ENCODE measurements at regions of chr11 and their contacts with region 1.

Region 1: DNA sequence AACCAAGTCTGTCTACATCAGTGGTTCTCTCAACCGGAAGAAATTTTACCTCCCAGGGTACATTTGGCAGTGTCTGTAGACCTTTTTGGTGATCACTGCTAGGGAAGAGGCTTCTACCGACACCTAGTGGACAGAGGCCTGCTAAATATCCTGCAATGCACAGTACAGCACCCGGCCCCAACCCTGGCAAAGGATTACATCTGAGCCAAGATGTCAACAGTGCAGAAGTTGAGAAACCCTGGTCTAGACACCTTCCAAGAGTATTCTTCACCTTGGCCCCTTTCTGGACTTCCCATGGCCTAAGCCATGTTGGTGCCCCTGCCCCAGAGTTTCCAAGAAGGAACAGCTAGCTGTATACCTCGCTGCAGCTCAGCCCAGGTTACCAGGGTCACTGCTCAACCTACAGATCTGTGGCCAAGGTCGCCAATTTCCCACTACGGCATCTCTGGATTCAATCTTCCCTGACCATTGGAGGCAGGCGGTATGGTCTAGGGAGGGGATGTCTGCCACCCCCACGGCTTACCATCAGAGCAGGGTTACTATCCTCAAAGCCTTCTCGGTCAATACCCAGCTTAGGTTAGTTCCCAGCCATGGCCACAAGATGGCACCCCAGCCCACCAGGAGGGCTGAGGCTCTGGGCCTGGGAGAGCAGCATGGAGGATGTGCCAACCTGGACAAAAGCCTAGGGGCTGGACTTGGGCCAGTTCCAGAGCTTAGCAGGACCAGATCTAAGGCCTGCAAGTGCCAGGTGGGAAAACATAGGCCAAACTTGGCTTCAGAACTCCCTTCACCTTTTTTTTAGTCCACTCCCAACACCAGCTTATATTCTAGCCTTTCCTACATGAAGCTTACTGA is 3.7 kb upstream of the KCNC1 start:
- H3K4me3 ChIP-seq: no peak overlapping the region
- H3K27ac ChIP-seq: no peak overlapping the region
- H3K4me1 ChIP-seq: no peaks in the 10 kb centered on the region
- CTCF ChIP-seq: peak; percentile 78

Region 2: GRCh38 chr11:17605651-17606122 is 125.1 kb before region 1 on chr11:
- CTCF ChIA-PET with region 1: interaction called, 102 read pairs
- POLR2A ChIA-PET with region 1: interaction called, 3 read pairs
- H3K4me3 ChIP-seq: no peak overlapping the region
- H3K27ac ChIP-seq: no peak overlapping the region
- H3K4me1 ChIP-seq: no peaks in the 10 kb centered on the region
- CTCF ChIP-seq: no peak

Region 3: GRCh38 chr11:17827006-17827405 is 96.2 kb after region 1 on chr11:
- CTCF ChIA-PET with region 1: interaction called, 20 read pairs
- POLR2A ChIA-PET with region 1: no interaction called
- H3K4me3 ChIP-seq: no peak overlapping the region
- H3K27ac ChIP-seq: no peak overlapping the region
- H3K4me1 ChIP-seq: no peaks in the 10 kb centered on the region
- CTCF ChIP-seq: no peak

Region 4: DNA sequence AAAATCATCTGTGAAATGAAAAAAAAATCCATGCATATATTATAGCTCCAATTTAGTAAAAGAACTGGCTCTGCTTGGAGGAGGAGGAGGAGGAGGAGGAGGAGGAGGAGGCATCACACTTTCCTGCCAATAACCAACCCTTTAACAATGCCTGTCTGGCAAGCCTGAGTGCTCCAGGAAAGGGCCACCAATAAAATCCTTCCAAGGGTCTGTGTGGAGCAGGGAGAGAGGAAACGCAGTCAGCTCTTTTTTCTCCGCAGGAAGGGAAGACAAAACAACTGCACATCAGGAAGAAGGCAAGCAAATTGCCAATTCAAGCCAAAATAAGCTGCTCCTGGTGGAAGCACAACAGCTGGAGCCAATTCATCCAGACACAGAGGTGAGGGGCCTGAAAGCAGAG is 142.8 kb after region 1 on chr11:
- CTCF ChIA-PET with region 1: interaction called, 14 read pairs
- POLR2A ChIA-PET with region 1: no interaction called
- H3K4me3 ChIP-seq: no peak overlapping the region
- H3K27ac ChIP-seq: no peak overlapping the region
- H3K4me1 ChIP-seq: no peaks in the 10 kb centered on the region
- CTCF ChIP-seq: no peak

Region 5: DNA sequence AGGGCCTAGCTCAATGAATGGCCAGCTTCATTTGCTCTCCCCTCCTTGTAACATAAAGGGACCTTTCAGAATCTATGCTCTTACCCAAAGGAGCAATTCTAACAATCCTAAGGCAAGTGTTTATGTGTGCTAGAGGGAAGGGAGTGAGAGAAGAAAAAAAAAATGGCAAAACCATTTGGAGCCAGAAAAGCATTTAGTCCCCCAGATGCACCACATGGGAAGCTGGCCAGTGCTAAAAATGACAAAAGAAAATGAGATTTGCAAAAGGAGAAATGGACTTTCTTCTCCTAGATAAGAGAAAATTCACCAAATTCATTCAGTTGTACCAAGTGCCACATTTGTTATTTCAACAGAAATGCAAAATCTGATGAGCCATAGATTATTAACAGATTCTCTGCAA is 229.3 kb after region 1 on chr11:
- CTCF ChIA-PET with region 1: interaction called, 22 read pairs
- POLR2A ChIA-PET with region 1: no interaction called
- H3K4me3 ChIP-seq: no peak overlapping the region
- H3K27ac ChIP-seq: no peak overlapping the region
- H3K4me1 ChIP-seq: no peaks in the 10 kb centered on the region
- CTCF ChIP-seq: no peak

Region 6: DNA sequence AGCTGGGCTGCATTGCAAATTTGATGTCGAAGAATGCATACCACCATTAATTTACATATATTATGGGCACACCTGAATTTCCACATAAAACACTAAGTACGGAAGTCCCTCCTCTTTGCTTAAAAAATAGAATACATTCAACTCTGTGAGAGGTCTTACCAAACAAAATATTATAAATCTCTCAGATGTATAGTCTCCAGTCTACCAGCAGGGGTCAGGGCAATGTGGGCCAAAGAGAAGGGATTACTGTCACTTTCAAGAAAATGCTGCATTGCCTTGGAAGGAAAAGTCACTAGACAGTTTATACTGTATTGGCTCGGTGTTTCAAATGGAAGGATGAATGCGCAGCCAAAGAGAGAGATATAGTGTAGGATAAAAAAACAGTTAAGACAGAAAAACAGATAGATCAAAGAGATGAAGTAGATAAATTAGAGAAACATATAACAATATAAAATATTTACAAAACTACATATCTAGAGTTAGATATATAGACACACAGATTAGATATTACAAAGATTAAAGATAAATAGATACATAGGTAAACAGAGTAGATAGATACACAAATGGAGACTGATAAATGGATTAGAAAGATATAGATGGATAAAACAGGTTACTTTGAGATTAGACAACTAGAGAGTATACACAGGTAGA is 261.1 kb after region 1 on chr11:
- CTCF ChIA-PET with region 1: interaction called, 357 read pairs
- POLR2A ChIA-PET with region 1: no interaction called
- H3K4me3 ChIP-seq: no peak overlapping the region
- H3K27ac ChIP-seq: no peak overlapping the region
- H3K4me1 ChIP-seq: no peaks in the 10 kb centered on the region
- CTCF ChIP-seq: 0 out of 2 replicates have a peak, but pooled peaks have one; percentile 27